HCT116 (cell line): ENCODE measurements at regions of chrX and their contacts with region 1.

Region 1: GRCh38 chrX:7925867-7926472 is 1.2 kb downstream of the PNPLA4 start:
- DNase-seq: peak; percentile 27
- ATAC-seq: no peak
- H3K4me3 ChIP-seq: peak overlapping the region; percentile 64 to 68
- H3K27ac ChIP-seq: no peak overlapping the region
- H3K4me1 ChIP-seq: peaks cover 0 to 7% of the 10 kb centered on the region in 2 experiments; a peak in 1 of 4 replicates
- H3K27me3 ChIP-seq: no peaks in the 10 kb centered on the region
- CTCF ChIP-seq: peak; percentile 23 to 62 (median 57); a peak in 5 of 6 replicates
- POLR2A ChIP-seq: no peak
- RAD21 ChIP-seq: peak; percentile 53

Region 2: DNA sequence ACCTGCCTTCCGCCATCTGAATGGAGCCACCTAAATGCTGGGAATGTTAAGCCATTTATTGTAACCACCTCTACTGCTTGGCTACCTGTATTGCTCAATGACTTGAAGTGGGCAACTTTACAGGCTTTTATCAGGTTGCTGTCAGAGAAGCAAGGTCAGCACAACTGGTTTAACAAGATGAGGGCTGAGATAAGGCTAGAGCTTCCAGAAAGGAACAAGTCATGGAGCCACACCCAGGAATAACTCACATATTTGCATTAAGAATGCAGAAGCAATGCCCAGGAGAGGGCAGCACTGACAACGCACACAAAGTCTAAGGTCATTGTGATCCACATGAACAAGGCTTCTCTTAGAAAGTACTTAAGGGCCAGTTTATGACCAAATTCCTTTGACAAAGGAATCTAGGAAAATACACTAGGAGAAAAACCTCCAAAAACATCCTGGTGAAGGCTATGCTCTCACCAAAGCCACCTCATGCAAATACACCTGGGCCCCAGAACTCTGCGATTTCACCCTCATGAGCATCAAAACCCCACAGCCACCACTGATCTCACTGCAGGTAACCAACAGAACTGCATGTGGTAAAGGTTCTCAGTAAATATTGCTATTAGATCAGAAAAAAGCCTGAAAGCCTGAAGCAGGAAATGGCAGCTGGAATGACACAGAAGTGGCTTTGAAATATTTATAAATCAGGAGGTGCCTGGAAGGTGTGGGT is 793.5 kb before region 1 on chrX:
- CTCF ChIA-PET with region 1: no interaction called
- POLR2A ChIA-PET with region 1: no interaction called
- RAD21 ChIA-PET with region 1: no interaction called
- intact Hi-C with region 1: loop called (anchors 2 kb)
- DNase-seq: peak; percentile 56
- ATAC-seq: peak; percentile 96
- H3K4me3 ChIP-seq: peak overlapping the region in 1 of 2 experiments; percentile 23; a peak in 1 of 4 replicates
- H3K27ac ChIP-seq: peak overlapping the region; percentile 68
- H3K4me1 ChIP-seq: peaks cover 16 to 21% of the 10 kb centered on the region in 2 experiments
- H3K27me3 ChIP-seq: no peaks in the 10 kb centered on the region
- CTCF ChIP-seq: peak; percentile 19 to 58 (median 45); a peak in 5 of 6 replicates
- POLR2A ChIP-seq: no peak
- RAD21 ChIP-seq: peak; percentile 45

Region 3: GRCh38 chrX:8122538-8122937 is 196.6 kb after region 1 on chrX:
- CTCF ChIA-PET with region 1: no interaction called
- POLR2A ChIA-PET with region 1: no interaction called
- RAD21 ChIA-PET with region 1: no interaction called
- intact Hi-C with region 1: no loop called
- DNase-seq: no peak
- ATAC-seq: no peak
- H3K4me3 ChIP-seq: no peak overlapping the region
- H3K27ac ChIP-seq: no peak overlapping the region
- H3K4me1 ChIP-seq: no peaks in the 10 kb centered on the region
- H3K27me3 ChIP-seq: no peaks in the 10 kb centered on the region
- CTCF ChIP-seq: no peak
- POLR2A ChIP-seq: no peak
- RAD21 ChIP-seq: no peak

Region 4: GRCh38 chrX:8139716-8140115 is 213.7 kb after region 1 on chrX:
- CTCF ChIA-PET with region 1: no interaction called
- POLR2A ChIA-PET with region 1: no interaction called
- RAD21 ChIA-PET with region 1: no interaction called
- intact Hi-C with region 1: no loop called
- DNase-seq: no peak
- ATAC-seq: no peak
- H3K4me3 ChIP-seq: no peak overlapping the region
- H3K27ac ChIP-seq: no peak overlapping the region
- H3K4me1 ChIP-seq: no peaks in the 10 kb centered on the region
- H3K27me3 ChIP-seq: no peaks in the 10 kb centered on the region
- CTCF ChIP-seq: no peak
- POLR2A ChIP-seq: no peak
- RAD21 ChIP-seq: no peak